ENCODE measurements at regions of chr1 and their contacts with region 1.

Region 1: DNA sequence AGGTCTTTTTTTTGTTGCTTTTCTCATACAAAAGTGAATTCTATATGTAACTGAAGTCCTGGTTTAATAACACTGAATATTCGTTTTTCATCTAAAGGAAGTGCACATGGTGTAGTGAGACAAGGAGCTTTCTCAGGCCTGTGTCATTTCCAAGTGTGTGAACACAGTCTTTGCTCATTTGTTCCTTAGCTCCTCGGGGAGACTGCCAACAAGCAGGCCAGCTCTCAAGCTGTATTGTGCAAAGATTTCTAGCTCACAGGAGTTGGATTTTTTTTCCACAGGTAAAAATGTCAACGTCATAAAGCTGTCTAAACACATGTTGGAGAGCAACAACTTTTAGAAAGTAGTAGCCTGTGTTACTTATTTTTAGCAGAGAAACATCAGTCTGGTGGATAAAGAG is 87.8 kb upstream of the S1PR1 start:
- DNase-seq: peak in 1 of 2 donors; percentile 68
- H3K4me3 ChIP-seq: no peak overlapping the region
- H3K27ac ChIP-seq: peak overlapping the region; percentile 4 to 21
- H3K4me1 ChIP-seq: peaks cover 0 to 25% of the 10 kb centered on the region in 2 donors
- H3K27me3 ChIP-seq: no peaks in the 10 kb centered on the region
- CTCF ChIP-seq: no peak

Region 2: DNA sequence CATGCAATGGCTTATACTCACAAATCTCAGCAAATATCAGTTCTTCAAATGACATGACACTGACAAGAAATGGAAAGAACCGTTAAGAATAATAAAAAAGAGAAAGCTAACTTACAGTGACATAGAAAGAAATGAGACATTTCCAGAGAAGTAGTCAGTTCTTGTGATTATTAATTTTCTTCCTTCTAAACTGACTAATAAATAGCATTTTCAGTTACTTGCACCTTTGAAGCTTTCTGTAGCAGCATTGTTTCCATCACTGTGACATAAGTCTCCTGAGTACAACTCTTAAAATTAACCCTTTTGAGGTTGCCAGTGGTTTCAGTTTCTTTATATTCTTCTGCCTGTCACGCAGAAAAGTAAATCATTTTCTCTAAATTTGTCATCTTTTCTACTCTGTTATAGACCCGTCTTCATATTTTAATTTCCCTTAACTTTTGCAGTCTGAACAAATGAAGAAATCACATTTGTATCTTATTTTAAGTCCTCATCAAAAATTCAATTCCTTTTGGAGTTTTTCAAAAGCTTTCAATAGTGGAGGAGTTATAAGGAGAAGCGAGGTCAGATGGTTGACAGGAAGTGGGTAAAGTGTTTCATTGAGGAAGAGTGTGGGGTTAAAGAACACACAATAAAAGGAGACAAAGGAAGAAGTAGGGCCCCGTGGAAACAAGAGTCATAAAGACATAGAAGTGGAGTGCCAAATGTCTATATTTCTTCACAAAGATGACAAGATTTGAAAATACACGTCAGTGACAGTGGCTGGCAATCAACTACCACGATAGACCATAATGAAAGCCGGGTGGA is 29.9 kb after region 1 on chr1:
- intact Hi-C with region 1: loop called (anchors 5 kb)
- DNase-seq: no peak
- H3K4me3 ChIP-seq: no peak overlapping the region
- H3K27ac ChIP-seq: no peak overlapping the region
- H3K4me1 ChIP-seq: peaks cover 0 to 3% of the 10 kb centered on the region in 2 donors
- H3K27me3 ChIP-seq: no peaks in the 10 kb centered on the region
- CTCF ChIP-seq: no peak

Measured in ascending aorta (tissue), 2 donors.